ENCODE measurements at regions of chr15 and their contacts with region 1.

Region 1: DNA sequence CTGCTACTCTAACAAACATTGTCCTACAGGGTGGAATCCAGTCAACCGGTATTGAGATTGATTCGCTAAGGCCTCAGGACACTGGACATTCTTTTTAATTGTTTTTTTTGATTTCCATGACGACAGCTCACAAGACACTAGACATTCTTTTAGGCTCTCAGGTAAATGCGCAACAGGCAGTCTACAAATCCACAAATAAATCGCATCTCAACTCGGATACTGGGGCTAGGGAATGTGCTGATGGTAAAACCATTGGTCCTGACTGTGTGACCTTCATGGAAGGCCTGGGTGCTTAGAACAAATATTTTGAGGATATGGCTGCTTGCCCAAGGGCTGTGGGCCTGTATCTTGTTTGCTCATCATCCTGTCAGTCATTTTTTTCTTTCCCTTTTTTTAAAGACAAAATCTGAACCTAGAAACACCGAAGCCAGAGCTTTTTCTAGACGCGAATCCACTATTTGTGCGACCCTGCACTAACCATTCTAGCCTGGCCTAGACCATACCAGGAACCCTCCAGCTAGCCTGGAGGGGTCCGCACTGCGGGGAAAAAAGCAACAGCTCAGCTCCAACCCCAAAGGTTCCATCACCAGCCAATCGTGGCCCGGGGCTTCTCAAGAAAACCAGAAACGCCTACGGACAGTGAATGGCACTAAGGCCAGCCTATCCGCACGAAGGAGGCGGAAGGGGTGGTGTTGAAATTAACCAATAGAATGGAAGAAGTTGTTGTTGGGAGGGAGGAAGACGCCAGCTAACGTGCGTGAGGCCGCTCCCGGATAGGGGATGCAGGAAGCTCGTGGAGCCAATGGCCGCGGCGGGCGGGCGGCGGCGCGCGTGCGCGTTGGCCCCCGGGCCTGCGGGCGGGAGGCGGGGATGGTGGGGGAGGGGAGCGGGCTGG is 18.1 kb upstream of the CHD2 start:
- DNase-seq: peak; percentile 97
- ATAC-seq: peak; percentile 97 to 98

Region 2: DNA sequence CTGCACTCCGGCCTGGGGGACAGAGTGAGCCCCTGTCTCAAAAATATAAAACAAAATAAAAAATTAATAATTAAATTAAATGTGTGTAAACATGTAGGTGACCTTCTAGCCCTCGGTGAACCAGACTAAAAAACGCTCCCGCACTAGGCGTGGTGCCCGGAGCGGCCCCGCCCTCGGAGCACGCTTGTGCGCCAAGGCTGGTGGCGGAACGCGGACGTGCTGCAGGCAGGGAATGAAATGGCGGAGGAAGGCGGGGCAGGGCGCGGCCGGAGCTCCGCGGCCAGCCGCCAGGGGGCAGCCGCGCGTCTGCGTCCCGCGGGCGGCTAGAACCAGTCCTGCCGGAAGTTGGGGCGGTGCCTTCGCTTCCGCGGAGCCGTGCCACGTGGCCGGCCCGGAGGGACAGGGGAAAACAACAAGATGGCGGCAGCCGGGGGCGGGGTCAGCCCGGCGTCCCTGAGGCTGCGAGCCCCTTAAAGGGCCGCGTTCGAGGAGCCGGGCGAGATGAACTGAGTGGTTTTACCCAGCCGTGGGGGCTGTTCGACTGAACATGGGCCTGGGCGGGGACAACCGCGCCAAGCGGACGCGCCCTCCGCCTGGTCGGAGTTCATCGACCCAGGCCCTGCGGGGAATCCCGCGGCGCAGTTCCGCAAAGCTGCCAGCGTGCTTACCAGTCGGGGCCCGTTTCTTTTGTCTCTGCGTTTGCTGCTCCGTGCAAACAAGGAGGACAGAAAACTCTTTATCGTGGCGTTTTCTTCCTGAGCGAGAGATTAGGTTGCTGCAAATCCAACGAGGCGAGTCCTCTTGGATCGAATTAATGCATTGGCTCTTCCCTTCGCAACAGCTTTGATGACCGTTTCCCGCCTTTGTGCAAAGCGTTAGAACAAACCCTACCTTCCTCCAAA is 72.8 kb before region 1 on chr15:
- intact Hi-C with region 1: loop called in 1 of 2 experiments (anchors 2 kb)
- DNase-seq: peak; percentile 99
- ATAC-seq: peak; percentile 91

Region 3: DNA sequence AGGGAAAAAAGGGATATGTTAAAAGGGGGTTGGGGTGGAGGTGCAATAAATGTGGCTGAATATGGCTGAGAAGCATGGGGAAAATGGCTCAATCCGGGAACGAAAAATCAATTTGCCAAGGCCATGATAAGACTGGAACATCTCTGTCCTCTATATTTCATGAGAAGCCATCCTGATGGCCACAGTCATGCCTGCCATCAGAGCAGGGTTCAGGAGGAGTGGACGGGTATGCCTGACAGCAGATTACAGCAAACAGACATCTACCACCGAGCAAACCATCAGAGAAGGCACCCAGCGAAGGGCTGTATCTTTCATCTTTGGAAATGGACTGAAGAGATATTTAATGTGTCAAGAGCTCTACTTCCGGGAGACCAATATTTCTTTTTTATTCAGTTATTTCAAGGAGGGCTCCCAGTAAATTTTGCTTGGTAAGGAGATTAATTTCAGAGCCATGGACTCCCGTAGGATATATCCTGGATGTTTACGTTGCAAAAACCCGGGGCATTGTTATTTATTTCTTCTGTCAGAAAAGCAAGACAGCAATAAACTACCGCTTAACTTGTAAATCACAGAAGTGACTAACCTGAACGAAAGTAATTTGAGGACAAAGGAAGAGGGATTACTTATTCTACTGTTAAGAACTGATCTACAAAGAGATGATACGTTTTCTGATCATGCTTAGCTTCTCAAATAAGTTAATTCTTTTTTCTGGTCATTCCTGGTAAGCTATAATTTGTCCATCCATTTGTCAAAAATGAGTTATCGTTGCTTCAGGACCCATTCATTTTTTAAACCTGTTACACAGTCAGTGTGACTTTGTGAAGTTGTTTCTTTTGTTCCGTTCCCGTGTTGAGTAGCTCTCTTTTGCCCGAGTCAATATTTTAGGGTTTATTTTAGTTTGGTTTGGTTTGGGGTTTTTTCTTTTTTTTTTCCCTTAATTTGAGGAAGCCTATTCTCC is 62.5 kb before region 1 on chr15:
- intact Hi-C with region 1: loop called in 1 of 2 experiments (anchors 5 kb)
- DNase-seq: no peak
- ATAC-seq: peak in 1 of 2 donors; percentile 48

Region 4: GRCh38 chr15:92831655-92832328 is 50.3 kb before region 1 on chr15:
- intact Hi-C with region 1: loop called in 1 of 2 experiments (anchors 5 kb)
- DNase-seq: peak; percentile 91
- ATAC-seq: peak; percentile 98

Region 5: DNA sequence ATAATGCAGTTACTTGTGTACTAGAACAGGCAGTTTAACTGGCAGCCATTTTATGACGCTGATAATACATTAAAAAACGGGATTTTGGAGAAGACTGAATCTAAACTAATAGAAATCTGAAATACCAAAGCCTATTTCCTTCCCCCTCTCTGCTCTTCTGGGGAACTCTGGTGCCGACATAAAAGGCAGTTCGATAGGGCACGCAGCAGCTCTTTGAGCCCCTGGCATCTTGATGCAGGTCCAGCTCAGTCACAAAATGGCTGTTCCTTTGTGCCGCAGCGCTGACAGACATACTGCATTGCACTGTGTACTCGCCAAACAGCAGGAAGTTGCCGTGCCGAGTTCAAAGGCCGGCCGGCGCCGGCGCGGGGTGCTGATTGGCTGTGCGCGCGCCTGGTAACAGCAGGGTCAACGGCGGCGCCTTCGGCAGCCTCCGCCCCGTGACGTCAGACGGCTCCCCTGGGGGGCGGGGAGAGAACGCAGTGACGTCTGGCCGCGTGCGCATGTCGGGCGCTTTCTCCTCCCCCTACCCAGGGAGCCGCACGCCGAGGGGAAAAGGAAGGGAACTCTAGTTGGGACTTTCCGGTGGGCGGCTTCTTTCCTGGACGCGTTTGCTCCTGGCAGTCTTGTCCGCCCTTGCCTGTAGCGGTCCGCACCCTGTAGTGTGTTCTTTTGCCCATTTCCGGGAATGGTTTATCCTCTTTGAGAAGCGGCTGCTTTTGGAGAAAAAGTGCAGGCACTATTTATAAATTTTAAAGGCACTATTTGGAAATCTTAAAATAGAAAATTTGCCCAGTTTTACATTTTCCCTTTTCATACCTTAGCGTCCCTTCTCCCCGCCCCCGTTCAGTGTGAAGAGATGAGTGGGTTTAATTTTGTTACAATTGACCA is 22.1 kb after region 1 on chr15:
- intact Hi-C with region 1: loop called in 1 of 2 experiments (anchors 2 kb)
- DNase-seq: peak; percentile 98
- ATAC-seq: peak; percentile 94 to 95

Region 6: GRCh38 chr15:93030430-93031105 is 148.5 kb after region 1 on chr15:
- intact Hi-C with region 1: no loop called
- DNase-seq: peak; percentile 62
- ATAC-seq: peak; percentile 55 to 65

Measured in left cardiac atrium (tissue), 4 donors.